GM10248 (cell line): ENCODE measurements at regions of chr6 and their contacts with region 1.

Region 1: GRCh38 chr6:24855395-24856245 is 56.9 kb upstream of the ARMH2 start:
- DNase-seq: peak; percentile 78
- CTCF ChIP-seq: peak; percentile 81

Region 2: DNA sequence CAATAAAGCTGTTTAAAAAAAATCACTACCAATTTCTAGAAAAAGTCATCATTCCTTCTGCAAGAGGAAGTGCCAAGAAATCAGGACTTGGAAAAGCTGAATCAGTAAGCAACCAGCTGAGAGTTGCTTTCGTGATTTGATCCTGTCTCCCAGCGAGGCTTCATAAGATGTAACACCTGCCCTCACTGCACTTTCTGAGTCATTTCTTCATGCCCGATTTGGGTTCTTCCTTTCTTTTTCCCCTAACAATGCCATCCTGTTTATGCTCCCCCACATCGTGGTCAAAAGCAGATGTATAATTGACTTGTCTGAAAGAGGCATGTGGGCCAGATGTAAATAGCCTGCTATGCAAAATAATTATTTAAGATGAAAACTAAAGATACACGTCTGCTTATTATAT is 28.0 kb after region 1 on chr6:
- CTCF ChIA-PET with region 1: interaction called, 14 read pairs
- POLR2A ChIA-PET with region 1: no interaction called
- DNase-seq: no peak
- CTCF ChIP-seq: no peak